Pancreas (tissue), 10 donors: ENCODE measurements at regions of chr4 and their contacts with region 1.

Region 1: GRCh38 chr4:16443504-16444088 is 217.3 kb upstream of the TAPT1 start:
- DNase-seq: no peak
- ATAC-seq: peak in 3 of 4 donors; percentile 72 to 74 (median 72)
- H3K4me3 ChIP-seq: no peak overlapping the region
- H3K27ac ChIP-seq: no peak overlapping the region
- H3K4me1 ChIP-seq: peaks cover 5 to 11% (median 9%) of the 10 kb centered on the region in 3 donors
- H3K27me3 ChIP-seq: no peaks in the 10 kb centered on the region
- CTCF ChIP-seq: peak; percentile 35 to 59 (median 47)

Region 2: DNA sequence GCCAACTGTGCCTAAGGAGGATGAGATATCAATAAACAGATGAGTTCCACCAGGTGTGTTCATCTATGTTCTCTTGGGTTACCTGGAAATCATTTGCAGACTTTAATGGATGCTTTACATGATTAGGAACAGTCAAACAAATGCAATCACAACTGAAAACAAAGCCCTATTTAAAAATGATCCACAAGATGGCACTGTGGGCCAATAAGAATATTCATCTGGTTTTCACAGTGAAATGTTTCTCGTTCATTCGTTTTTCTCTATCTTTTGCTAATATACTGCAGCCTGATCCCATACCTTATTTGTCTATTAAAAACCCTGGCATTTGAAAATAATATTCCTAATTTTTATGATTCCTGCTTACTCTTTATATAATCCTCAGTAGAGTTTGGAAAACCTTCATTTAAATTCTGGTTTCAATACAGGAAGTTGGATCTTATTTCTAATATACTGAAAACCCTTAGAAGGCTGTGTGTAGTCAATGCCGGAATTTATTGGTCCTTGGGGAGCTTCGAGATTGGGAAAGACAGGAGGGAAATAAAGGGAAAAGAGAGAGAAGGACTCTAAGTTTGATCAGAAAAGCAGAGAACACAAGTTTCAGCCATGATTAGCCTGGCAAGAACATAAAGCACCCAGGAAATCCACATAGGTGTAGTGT is 153.6 kb before region 1 on chr4:
- intact Hi-C with region 1: loop called in 2 of 3 experiments (anchors 5 to 10 kb)
- DNase-seq: no peak
- ATAC-seq: peak in 3 of 4 donors; percentile 65 to 77 (median 70)
- H3K4me3 ChIP-seq: no peak overlapping the region
- H3K27ac ChIP-seq: no peak overlapping the region
- H3K4me1 ChIP-seq: peaks cover 0 to 7% (median 0%) of the 10 kb centered on the region in 3 donors
- H3K27me3 ChIP-seq: peaks cover 0 to 9% (median 0%) of the 10 kb centered on the region in 4 donors
- CTCF ChIP-seq: peak in 3 of 4 donors; percentile 52 to 57 (median 56)

Region 3: DNA sequence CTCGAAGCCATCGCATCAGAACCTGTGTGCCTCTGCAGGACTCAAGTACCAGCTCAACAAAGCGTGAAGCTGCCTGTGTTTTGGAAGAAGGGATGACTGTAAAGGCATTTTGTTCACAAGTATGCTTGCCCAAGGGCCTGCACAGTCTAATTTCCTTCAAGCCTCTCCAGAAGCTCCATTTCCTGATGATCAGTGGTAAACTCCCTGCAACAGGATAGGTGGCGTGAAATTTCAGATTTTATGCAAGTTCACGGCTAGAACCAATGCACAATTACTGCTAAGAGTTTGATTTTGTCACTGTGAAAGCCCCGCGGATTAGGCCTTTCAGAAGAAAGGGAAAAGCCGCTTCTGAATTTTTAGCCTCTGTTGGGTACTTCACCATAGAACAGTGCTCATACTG is 128.1 kb before region 1 on chr4:
- intact Hi-C with region 1: no loop called
- DNase-seq: no peak
- ATAC-seq: no peak
- H3K4me3 ChIP-seq: no peak overlapping the region
- H3K27ac ChIP-seq: no peak overlapping the region
- H3K4me1 ChIP-seq: no peaks in the 10 kb centered on the region
- H3K27me3 ChIP-seq: no peaks in the 10 kb centered on the region
- CTCF ChIP-seq: no peak